ENCODE measurements at regions of chr7 and their contacts with region 1.

Region 1: DNA sequence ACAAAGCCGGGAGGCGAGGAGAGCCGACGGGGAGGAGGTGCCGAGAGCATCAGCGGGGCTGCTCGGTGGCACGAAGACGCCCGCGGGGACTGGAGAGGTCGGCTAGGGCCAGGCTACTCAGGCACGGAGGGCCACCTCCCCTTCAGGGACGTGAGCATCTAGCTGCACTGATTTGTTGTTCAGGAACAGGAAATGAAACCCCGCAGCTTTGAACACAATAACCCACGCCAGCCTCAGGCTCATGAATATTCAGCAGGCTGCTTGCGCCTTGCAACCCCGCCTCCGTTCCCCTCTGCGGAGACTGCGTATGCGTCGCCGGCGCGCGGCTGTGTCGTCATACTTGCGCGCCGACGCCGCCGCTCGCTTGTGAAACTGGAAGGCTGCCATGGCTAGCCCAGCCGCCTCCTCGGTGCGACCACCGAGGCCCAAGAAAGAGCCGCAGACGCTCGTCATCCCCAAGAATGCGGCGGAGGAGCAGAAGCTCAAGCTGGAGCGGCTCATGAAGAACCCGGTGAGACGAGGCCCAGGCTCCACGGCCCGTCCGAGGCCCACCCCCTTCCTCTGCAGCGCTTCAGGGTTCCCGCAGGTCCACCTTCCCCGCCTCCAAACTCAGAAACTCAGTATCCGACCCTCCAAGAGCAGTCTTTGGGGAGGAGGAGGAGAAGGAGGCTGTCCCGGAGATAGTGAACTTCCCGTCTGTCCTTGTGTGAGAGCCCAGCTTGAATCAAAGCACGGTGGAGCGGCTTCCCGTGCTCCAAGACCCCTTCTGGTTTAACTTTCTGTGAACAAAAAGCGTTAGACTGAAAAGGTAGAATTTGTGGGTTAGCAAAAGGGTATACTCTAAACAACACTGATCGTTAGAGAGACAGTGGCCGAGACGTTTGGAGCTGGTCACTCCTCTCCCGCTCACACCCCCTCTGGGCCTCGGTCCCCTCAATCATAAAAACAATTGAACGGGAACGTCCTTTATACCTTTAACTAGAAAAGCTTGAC is at the start of gene PRKRIP1:
- DNase-seq: peak; percentile 58 to 95 (median 89)
- ATAC-seq: peak; percentile 99
- H3K4me3 ChIP-seq: peak within 1 kb of the TSS; percentile 92
- H3K4me3 Mint-ChIP-seq: peak within 1 kb of the TSS; percentile 89 to 98 (median 96)
- H3K27ac ChIP-seq: peak within 1 kb of the TSS; percentile 86
- H3K27ac Mint-ChIP-seq: peak within 1 kb of the TSS; percentile 87 to 99 (median 98)
- H3K4me1 ChIP-seq: peaks cover 9 to 15% of the 10 kb centered on the region in 2 donors
- H3K4me1 Mint-ChIP-seq: peaks cover 12 to 35% (median 22%) of the 10 kb centered on the region in 7 donors
- H3K27me3 ChIP-seq: no peaks in the 10 kb centered on the region
- H3K27me3 Mint-ChIP-seq: no peaks in the 10 kb centered on the region
- total RNA-seq, gene PRKRIP1: 36.4 to 58.4 (median 47.0) TPM

Region 2: DNA sequence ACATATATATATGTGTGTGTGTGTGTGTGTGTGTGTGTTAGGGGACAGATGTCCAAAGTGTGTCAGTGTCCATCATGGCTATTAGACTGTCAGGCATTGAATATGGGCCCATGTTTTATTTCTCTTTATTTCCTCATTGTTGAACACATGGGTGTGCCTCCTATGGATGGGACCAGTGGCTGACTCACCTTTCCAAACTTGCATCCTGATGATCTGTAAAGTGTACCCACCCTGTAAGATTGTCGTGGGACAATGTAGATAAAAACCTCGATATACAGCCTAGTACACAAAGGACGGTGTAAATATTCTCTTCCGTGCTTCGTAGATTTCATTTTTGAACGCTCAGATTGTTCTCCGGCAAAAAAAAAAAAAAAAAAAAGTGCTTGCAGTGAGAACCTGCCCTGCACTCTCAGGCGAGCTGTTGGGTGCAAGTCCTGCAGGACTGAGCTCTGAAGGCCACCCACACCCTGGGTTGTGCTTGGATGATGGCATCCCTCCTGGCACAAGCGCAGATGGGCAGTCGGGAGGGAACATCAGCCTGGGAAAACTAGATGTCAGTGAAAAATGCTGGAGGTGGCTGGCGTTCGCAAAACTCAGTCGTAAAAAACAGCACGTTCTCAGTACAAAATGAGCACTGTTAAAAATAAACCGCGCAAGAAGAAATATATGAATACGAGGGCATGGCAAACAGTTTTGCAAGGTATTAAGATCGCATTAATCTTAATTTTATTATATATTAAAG is 412.0 kb before region 1 on chr7:
- CTCF ChIA-PET with region 1: no interaction called
- POLR2A ChIA-PET with region 1: no interaction called
- intact Hi-C with region 1: no loop called
- DNase-seq: no peak
- ATAC-seq: no peak
- H3K4me3 ChIP-seq: no peak overlapping the region
- H3K4me3 Mint-ChIP-seq: no peak overlapping the region
- H3K27ac ChIP-seq: no peak overlapping the region
- H3K27ac Mint-ChIP-seq: no peak overlapping the region
- H3K4me1 ChIP-seq: no peaks in the 10 kb centered on the region
- H3K4me1 Mint-ChIP-seq: peaks cover 0 to 32% (median 12%) of the 10 kb centered on the region in 7 donors
- H3K27me3 ChIP-seq: no peaks in the 10 kb centered on the region
- H3K27me3 Mint-ChIP-seq: no peaks in the 10 kb centered on the region

Region 3: GRCh38 chr7:102286237-102287110 is 109.8 kb before region 1 on chr7 and contains the start of gene SH2B2:
- CTCF ChIA-PET with region 1: interaction called, 5 read pairs
- POLR2A ChIA-PET with region 1: interaction called, 6 read pairs
- intact Hi-C with region 1: loop called in 1 of 2 experiments (anchors 2 kb)
- DNase-seq: peak; percentile 31 to 62 (median 50)
- ATAC-seq: peak; percentile 73
- H3K4me3 ChIP-seq: peak within 1 kb of the TSS; percentile 67
- H3K4me3 Mint-ChIP-seq: peak within 1 kb of the TSS; percentile 71 to 88 (median 80)
- H3K27ac ChIP-seq: peak within 1 kb of the TSS; percentile 61
- H3K27ac Mint-ChIP-seq: peak within 1 kb of the TSS in 4 of 9 donors; percentile 33 to 73 (median 67)
- H3K4me1 ChIP-seq: peaks cover 16 to 17% of the 10 kb centered on the region in 2 donors
- H3K4me1 Mint-ChIP-seq: peaks cover 16 to 37% (median 31%) of the 10 kb centered on the region in 7 donors
- H3K27me3 ChIP-seq: no peaks in the 10 kb centered on the region
- H3K27me3 Mint-ChIP-seq: peaks cover 0 to 22% (median 0%) of the 10 kb centered on the region in 5 donors
- total RNA-seq, gene SH2B2: 0.87 to 10.9 (median 2.0) TPM

Region 4: DNA sequence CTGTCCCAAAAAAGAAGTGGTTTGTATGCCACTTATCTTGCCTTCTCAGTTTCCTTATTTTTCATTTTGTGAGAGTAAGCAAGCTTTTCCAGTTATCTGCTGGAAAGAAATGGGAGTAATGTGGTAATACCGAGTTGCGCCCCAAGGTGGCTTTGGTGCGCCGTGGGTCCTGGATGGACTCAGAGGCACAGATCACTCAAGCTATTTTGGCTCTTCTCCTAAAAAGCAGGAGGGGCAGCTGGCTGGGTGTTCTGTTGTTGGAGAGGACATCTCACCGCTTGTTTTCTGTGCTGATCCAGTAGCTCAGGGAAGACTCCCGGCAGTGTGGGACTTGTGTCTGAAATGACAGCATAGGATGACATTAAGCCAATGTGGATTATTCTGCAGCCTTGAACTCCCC is 16.2 kb after region 1 on chr7:
- CTCF ChIA-PET with region 1: interaction called, 5 read pairs
- POLR2A ChIA-PET with region 1: interaction called, 11 read pairs
- intact Hi-C with region 1: loop called (anchors 1 to 2 kb)
- DNase-seq: peak in 7 of 9 donors; percentile 35 to 67 (median 56)
- ATAC-seq: peak; percentile 49
- H3K4me3 ChIP-seq: no peak overlapping the region
- H3K4me3 Mint-ChIP-seq: no peak overlapping the region
- H3K27ac ChIP-seq: peak overlapping the region; percentile 27
- H3K27ac Mint-ChIP-seq: peak overlapping the region in 8 of 9 donors; percentile 5 to 96 (median 58)
- H3K4me1 ChIP-seq: peaks cover 28 to 32% of the 10 kb centered on the region in 2 donors
- H3K4me1 Mint-ChIP-seq: peaks cover 25 to 48% (median 44%) of the 10 kb centered on the region in 7 donors
- H3K27me3 ChIP-seq: no peaks in the 10 kb centered on the region
- H3K27me3 Mint-ChIP-seq: no peaks in the 10 kb centered on the region

Region 5: DNA sequence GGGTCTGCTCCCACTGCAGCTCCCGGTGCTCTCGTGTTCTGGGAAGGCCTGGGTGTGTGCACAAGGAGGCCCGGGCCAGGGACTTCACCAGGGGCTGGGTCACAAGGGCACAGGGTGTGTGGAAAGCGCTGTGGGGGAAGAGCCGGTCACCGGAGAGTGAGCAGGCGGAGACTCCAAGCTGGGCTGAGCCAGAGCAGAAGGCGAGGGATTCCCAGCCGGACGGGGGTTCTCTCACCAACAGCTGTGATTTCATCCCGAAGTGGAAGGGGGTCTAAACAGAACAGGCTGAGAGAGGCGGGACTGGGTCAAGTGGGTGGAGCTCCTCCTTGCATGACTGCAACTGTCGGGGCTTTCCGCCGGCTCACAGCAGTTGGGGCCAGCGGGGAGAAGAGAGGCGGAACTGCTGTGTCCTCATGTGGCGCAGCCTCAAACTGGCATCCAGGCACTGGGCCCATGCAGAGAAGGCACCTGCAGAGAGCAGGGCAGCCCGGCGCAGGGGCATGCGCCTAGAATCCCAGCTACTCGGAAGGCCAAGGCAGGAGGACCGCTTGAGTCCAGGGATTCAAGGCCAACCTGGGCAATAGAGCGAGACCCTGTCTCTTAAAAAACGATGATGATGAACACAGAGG is 29.4 kb after region 1 on chr7:
- CTCF ChIA-PET with region 1: no interaction called
- POLR2A ChIA-PET with region 1: interaction called, 17 read pairs
- intact Hi-C with region 1: loop called in 1 of 2 experiments (anchors 2 kb)
- DNase-seq: peak in 8 of 9 donors; percentile 63 to 87 (median 78)
- ATAC-seq: peak; percentile 90
- H3K4me3 ChIP-seq: peak overlapping the region; percentile 77
- H3K4me3 Mint-ChIP-seq: peak overlapping the region; percentile 84 to 96 (median 88)
- H3K27ac ChIP-seq: peak overlapping the region; percentile 96
- H3K27ac Mint-ChIP-seq: peak overlapping the region; percentile 98 to 100 (median 100)
- H3K4me1 ChIP-seq: peaks cover 40 to 77% of the 10 kb centered on the region in 2 donors
- H3K4me1 Mint-ChIP-seq: peaks cover 54 to 86% (median 65%) of the 10 kb centered on the region in 7 donors
- H3K27me3 ChIP-seq: no peaks in the 10 kb centered on the region
- H3K27me3 Mint-ChIP-seq: no peaks in the 10 kb centered on the region

Region 6: GRCh38 chr7:102433219-102434038 is 37.1 kb after region 1 on chr7 and contains the start of gene ORAI2:
- CTCF ChIA-PET with region 1: interaction called, 5 read pairs
- POLR2A ChIA-PET with region 1: interaction called, 7 read pairs
- intact Hi-C with region 1: loop called in 1 of 2 experiments (anchors 2 kb)
- DNase-seq: peak; percentile 72 to 94 (median 81)
- ATAC-seq: peak; percentile 86
- H3K4me3 ChIP-seq: peak within 1 kb of the TSS; percentile 59
- H3K4me3 Mint-ChIP-seq: peak within 1 kb of the TSS; percentile 76 to 91 (median 88)
- H3K27ac ChIP-seq: peak within 1 kb of the TSS; percentile 96
- H3K27ac Mint-ChIP-seq: peak within 1 kb of the TSS; percentile 97 to 100 (median 99)
- H3K4me1 ChIP-seq: peaks cover 34 to 55% of the 10 kb centered on the region in 2 donors
- H3K4me1 Mint-ChIP-seq: peaks cover 38 to 62% (median 49%) of the 10 kb centered on the region in 7 donors
- H3K27me3 ChIP-seq: no peaks in the 10 kb centered on the region
- H3K27me3 Mint-ChIP-seq: no peaks in the 10 kb centered on the region
- total RNA-seq, gene ORAI2: 19.9 to 72.6 (median 26.2) TPM

Region 7: GRCh38 chr7:102450242-102450641 is 53.9 kb after region 1 on chr7:
- CTCF ChIA-PET with region 1: interaction called, 4 read pairs
- POLR2A ChIA-PET with region 1: interaction called, 10 read pairs
- intact Hi-C with region 1: no loop called
- DNase-seq: peak in 7 of 9 donors; percentile 50 to 65 (median 57)
- ATAC-seq: peak; percentile 91
- H3K4me3 ChIP-seq: no peak overlapping the region
- H3K4me3 Mint-ChIP-seq: no peak overlapping the region
- H3K27ac ChIP-seq: no peak overlapping the region
- H3K27ac Mint-ChIP-seq: peak overlapping the region in 5 of 9 donors; percentile 36 to 75 (median 62)
- H3K4me1 ChIP-seq: no peaks in the 10 kb centered on the region
- H3K4me1 Mint-ChIP-seq: peaks cover 0 to 5% (median 2%) of the 10 kb centered on the region in 7 donors
- H3K27me3 ChIP-seq: no peaks in the 10 kb centered on the region
- H3K27me3 Mint-ChIP-seq: no peaks in the 10 kb centered on the region

Region 8: DNA sequence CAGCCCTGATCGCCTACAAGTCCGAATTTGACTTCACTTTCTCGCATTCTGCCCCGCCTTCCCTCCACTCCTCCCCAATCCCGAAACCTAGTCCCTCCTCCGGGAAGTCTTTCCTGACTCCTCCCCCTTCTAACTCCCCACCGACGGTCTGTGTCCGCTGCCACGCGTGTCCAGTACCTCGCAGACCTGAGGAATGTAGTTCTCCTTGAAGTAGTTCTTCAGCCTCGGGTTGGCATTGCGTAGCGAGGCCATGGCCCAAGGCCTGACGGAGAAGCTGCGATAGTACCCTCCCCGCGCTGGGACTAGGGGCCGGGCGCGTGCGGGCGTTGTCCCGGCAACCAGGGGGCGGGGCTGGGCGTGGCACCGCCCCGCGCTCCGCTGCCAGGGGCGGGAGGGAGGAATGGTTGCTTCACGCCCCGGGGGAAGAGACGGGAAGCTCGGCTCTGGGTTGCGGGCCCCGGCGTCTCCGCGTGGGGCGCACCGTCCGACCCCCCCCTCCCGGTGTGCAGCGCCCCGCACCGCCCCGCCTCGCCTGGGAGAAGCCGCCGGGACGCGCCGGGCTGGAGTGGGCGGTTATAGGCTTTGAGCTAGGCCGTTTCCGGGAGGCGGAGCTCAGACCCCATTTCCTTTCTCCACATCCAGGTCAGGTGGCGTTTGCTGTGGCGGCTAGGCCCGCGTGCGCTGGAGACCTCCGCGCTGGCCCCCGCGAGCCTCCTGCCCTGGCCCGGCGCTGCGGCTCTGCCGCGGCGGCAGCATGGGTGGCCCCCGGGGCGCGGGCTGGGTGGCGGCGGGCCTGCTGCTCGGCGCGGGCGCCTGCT is 678.4 kb after region 1 on chr7 and contains the starts of genes ARMC10 and FBXL13:
- CTCF ChIA-PET with region 1: no interaction called
- POLR2A ChIA-PET with region 1: interaction called, 3 read pairs
- intact Hi-C with region 1: loop called in 1 of 2 experiments (anchors 1 kb)
- DNase-seq: peak; percentile 86 to 93 (median 88)
- ATAC-seq: peak; percentile 93
- H3K4me3 ChIP-seq: peak within 1 kb of the TSS; percentile 77
- H3K4me3 Mint-ChIP-seq: peak within 1 kb of the TSS; percentile 94 to 100 (median 97)
- H3K27ac ChIP-seq: peak within 1 kb of the TSS; percentile 81
- H3K27ac Mint-ChIP-seq: peak within 1 kb of the TSS; percentile 85 to 98 (median 93)
- H3K4me1 ChIP-seq: peaks cover 14 to 18% of the 10 kb centered on the region in 2 donors
- H3K4me1 Mint-ChIP-seq: peaks cover 21 to 53% (median 47%) of the 10 kb centered on the region in 7 donors
- H3K27me3 ChIP-seq: no peaks in the 10 kb centered on the region
- H3K27me3 Mint-ChIP-seq: peaks cover 0 to 2% (median 0%) of the 10 kb centered on the region in 5 donors
- total RNA-seq, gene ARMC10: 13.6 to 36.4 (median 27.5) TPM
- total RNA-seq, gene FBXL13: 0.44 to 1.9 (median 1.2) TPM

Measured in naive thymus-derived CD4-positive, alpha-beta T cell (primary cell).